Activated CD4-positive, alpha-beta T cell treated with anti-CD3 and anti-CD28 coated beads for 36 hours (primary cell): ENCODE measurements at regions of chr16 and their contacts with region 1.

Region 1: DNA sequence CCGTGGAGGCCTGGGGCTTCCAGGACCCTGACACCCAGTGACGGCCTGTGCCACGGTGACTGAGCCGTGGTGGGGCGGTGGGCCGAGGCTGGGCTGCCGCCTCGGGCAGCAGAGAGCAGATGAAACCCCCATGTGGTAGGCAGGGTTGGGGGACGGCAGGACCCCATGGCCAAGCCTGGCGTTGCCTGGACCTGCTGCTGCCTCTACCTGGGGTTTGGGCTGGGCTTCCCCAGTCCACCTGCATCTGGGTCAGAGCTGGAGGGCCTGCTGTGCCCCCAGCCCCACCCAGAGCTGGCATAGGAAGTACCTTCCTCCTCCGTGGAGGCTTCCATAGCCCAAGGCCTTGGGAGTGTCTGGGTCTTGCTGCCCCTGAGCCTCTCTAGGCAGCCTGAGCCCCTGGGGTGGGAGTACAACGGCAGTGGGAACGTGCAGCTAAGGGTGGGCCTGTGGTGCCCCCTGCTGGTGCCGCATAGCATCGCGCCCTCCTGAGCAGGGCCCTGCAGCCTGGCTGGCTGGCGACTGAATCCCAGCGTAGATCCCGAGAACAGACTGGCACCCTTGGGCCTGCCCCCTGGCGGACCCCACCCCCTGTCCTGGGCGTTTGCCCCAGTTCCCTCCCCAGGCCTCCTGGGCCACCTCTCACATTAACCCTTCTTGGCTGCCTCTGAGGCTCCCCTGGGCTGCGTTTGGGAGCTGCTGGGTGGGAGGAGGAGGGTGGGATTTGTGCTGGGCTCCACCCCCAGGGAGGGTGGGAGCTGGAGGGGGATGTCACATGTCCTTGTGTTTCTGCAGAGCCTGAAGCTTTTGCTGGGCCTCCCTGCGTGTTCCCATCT is 12.6 kb upstream of the ATP6V0C start:
- DNase-seq: peak; percentile 89
- ATAC-seq: peak; percentile 98
- H3K4me3 Mint-ChIP-seq: no peak overlapping the region
- H3K27ac Mint-ChIP-seq: no peak overlapping the region
- H3K4me1 Mint-ChIP-seq: no peaks in the 10 kb centered on the region
- H3K27me3 Mint-ChIP-seq: no peaks in the 10 kb centered on the region

Region 2: DNA sequence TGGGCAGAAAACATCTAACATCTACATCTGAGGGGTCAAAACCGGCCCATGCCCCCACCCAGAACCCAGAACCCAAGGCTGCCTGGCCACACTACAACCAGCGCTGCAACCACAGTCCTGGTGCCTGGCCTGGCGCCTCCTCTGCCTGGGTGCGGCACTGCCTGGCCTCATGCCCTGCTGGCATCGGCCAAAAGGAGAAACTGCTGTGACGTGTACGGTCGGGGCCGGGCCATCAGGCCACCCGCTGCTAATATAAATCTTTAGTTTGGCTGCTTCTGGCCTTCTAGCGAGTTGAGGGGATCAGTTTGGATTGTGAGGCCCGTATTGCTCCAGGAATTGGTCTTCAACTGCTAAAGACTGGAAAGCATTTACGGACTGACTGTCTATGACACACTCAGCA is 944.9 kb before region 1 on chr16:
- CTCF ChIA-PET with region 1: no interaction called
- POLR2A ChIA-PET with region 1: no interaction called
- intact Hi-C with region 1: no loop called
- DNase-seq: no peak
- ATAC-seq: no peak
- H3K4me3 Mint-ChIP-seq: no peak overlapping the region
- H3K27ac Mint-ChIP-seq: no peak overlapping the region
- H3K4me1 Mint-ChIP-seq: peaks cover 23% of the 10 kb centered on the region
- H3K27me3 Mint-ChIP-seq: no peaks in the 10 kb centered on the region

Region 3: GRCh38 chr16:2009789-2010510 is 491.2 kb before region 1 on chr16 and contains the start of gene ZNF598:
- CTCF ChIA-PET with region 1: no interaction called
- POLR2A ChIA-PET with region 1: no interaction called
- intact Hi-C with region 1: no loop called
- DNase-seq: peak; percentile 90
- ATAC-seq: peak; percentile 93
- H3K4me3 Mint-ChIP-seq: peak within 1 kb of the TSS; percentile 95
- H3K27ac Mint-ChIP-seq: peak within 1 kb of the TSS; percentile 90
- H3K4me1 Mint-ChIP-seq: peaks cover 35% of the 10 kb centered on the region
- H3K27me3 Mint-ChIP-seq: no peaks in the 10 kb centered on the region
- total RNA-seq, gene ZNF598: 64.6 to 69.8 TPM

Region 4: DNA sequence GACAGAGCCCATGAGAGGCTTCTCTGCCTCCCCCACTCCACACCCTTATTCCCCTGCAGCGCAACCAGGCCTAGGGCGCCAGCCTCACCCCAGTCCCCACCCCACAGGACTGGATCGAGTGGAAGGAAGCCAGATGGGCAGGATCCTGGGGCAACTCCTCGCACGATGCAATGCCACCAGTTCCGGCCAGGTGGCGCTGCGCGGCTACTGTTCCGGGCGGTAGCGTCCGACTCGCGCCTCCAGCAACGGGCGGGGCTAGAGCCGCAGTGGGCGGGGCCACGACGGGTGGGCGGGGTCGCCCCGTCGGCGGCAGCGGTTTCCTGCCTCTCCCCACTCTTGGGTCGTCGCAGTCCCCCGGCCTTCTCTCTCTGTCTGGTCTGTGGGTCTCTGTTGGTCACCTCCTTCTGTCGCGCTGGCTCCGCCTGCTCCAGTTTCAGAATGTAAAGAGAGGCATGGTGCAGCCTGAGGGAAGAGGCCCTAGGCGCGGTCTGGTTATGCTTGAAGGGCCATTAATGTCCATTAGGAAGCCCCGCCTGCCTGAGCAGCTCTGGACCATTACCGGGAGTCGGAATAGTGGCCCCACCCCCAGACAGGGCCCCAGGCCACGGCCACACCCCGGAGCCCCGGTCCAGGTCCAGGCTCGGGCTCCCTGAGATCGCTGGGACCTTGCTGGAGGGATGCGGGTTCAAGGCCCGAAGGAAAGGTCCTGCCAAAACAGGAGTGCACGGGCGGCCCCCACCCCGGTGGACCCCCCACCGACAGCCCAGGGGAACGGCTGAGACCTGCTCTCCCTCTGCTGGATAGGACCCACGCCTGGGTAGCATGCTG is 477.8 kb before region 1 on chr16:
- CTCF ChIA-PET with region 1: no interaction called
- POLR2A ChIA-PET with region 1: no interaction called
- intact Hi-C with region 1: loop called in 1 of 2 experiments (anchors 1 kb)
- DNase-seq: peak; percentile 97
- ATAC-seq: peak; percentile 86
- H3K4me3 Mint-ChIP-seq: peak overlapping the region; percentile 46
- H3K27ac Mint-ChIP-seq: no peak overlapping the region
- H3K4me1 Mint-ChIP-seq: peaks cover 15% of the 10 kb centered on the region
- H3K27me3 Mint-ChIP-seq: peaks cover 27% of the 10 kb centered on the region

Region 5: DNA sequence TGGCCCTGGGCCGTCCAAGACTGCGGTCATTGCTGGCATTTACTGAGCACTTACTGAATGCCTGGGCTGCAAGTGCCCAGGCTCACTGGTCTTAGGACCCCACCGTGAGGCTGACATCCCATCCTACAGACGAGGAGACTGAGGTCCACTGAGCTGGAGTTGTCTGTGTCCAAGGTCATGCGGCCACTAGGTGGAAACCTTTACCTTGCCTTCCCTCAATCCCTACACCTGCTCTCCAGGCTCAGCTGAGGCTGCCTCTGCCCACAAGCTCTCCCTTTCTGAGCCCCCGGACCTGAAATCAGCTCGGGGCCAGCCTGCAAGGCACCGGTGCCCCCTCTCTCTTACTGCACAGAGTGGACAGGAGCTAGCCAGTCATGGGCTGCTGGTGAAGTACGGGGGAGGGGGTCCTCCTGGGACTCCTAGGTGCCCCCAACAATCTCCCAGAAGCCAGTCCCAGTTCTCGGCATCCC is 306.2 kb before region 1 on chr16:
- CTCF ChIA-PET with region 1: interaction called, 3 read pairs
- POLR2A ChIA-PET with region 1: no interaction called
- intact Hi-C with region 1: loop called in 1 of 2 experiments (anchors 1 kb)
- DNase-seq: peak; percentile 74
- ATAC-seq: peak; percentile 87
- H3K4me3 Mint-ChIP-seq: peak overlapping the region; percentile 26
- H3K27ac Mint-ChIP-seq: no peak overlapping the region
- H3K4me1 Mint-ChIP-seq: peaks cover 5% of the 10 kb centered on the region
- H3K27me3 Mint-ChIP-seq: peaks cover 23% of the 10 kb centered on the region

Region 6: DNA sequence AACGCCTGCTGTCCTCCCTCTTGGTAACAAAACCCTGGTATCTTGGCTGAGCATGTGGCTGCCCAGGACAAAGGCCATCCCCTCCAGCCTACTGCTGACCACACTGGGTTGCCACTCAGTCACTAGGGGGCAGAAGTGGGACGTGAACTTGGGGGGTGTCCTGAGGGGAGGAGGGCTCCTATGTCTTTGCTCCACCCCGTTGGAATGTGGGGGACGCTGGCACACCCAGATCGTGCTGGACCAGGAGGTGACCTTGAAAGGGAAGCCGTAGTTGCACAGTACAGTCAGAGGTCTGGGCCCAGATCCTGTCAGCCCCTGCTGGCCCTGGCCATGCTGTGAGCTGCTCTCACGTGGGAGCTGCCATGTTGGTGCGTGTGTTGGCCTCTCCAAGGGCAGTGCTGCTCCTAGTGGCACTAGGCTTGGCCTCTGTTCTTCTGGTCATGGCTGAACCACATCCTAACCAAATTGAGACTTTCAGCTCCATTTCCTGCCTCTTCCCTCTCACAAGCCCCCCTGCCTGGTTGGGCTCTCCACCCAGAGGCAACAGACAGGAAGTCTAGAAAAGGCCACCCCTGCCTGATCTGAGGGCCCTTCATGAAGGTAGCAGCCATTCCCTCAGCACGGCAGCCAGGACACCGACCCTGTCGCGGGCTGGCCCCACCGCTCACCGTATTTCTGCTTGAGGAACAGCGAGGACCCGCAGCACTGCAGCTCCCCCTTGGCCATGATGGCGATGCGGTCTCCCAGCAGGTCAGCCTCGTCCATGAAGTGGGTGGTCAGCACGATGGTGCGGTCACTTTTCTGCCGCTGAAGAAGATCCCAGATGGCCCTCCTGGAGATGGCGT is 204.3 kb before region 1 on chr16:
- CTCF ChIA-PET with region 1: no interaction called
- POLR2A ChIA-PET with region 1: no interaction called
- intact Hi-C with region 1: loop called in 1 of 2 experiments (anchors 2 kb)
- DNase-seq: peak; percentile 49
- ATAC-seq: peak; percentile 49
- H3K4me3 Mint-ChIP-seq: no peak overlapping the region
- H3K27ac Mint-ChIP-seq: no peak overlapping the region
- H3K4me1 Mint-ChIP-seq: no peaks in the 10 kb centered on the region
- H3K27me3 Mint-ChIP-seq: no peaks in the 10 kb centered on the region

Region 7: DNA sequence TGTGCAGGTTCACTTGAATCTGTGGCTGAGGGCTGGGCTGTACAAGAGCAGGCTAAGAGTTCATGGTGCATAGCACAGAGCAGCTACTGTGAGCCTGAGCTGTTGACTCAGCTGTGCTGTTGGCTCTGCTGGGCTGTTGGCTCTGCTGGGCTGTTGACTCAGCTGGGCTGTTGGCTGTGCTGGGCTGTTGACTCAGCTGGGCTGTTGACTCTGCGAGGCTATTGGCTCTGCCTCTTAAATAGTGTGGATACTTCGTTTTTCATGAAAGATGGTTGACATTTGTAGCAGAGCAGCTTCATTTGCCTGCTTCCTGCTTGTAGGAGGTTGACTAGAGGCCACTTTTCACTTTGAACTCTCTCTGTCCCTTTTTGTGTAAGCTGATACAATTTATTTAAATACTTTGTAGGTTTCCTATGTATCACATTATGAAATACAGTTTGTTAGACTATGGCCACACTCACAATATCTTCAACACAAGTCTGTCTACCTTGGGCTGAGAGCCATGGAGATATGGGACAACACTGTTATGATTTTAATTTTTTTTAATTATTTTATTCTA is 112.2 kb before region 1 on chr16:
- CTCF ChIA-PET with region 1: no interaction called
- POLR2A ChIA-PET with region 1: no interaction called
- intact Hi-C with region 1: no loop called
- DNase-seq: peak; percentile 9
- ATAC-seq: peak; percentile 60
- H3K4me3 Mint-ChIP-seq: no peak overlapping the region
- H3K27ac Mint-ChIP-seq: no peak overlapping the region
- H3K4me1 Mint-ChIP-seq: no peaks in the 10 kb centered on the region
- H3K27me3 Mint-ChIP-seq: peaks cover 4% of the 10 kb centered on the region

Region 8: DNA sequence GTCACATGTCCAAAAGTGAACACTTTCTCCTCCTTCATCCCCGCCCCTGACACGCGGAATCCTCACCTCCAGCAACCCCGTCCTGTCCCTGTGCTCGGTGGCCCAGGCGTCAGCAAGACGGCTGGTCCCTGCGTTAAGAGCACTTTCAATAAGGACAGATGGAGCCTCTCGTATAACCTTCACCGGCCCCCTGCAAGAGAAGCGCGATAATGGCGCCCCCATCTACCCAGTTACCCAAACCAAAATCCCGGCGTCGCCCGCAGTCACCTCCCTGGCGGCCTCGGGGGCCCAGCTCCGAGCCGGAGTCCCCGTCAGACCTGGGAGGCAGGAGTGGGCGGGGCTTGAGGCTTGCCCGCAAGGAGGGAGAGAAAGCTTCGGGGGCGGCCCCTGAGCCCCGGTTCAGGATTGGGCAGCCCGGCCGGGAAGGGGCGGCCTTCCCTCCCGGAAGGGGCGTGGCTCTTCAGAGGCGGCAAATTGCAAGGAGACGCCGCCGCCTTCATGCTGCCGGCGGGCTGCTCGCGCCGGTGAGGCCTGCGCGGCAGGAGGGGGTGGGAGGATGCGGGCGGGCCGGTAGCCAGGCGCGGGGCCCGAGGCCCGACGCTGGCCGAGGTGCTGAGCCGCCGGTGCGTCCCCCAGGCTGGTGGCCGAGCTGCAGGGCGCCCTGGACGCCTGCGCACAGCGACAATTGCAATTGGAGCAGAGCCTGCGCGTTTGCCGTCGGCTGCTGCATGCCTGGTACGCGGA is 41.3 kb before region 1 on chr16 and contains the start of gene TEDC2:
- CTCF ChIA-PET with region 1: interaction called, 3 read pairs
- POLR2A ChIA-PET with region 1: no interaction called
- intact Hi-C with region 1: loop called (anchors 1 to 5 kb)
- DNase-seq: peak; percentile 99
- ATAC-seq: peak; percentile 98
- H3K4me3 Mint-ChIP-seq: peak within 1 kb of the TSS; percentile 73
- H3K27ac Mint-ChIP-seq: peak within 1 kb of the TSS; percentile 67
- H3K4me1 Mint-ChIP-seq: peaks cover 6% of the 10 kb centered on the region
- H3K27me3 Mint-ChIP-seq: no peaks in the 10 kb centered on the region
- total RNA-seq, gene TEDC2: 21.0 to 23.1 TPM

Region 9: GRCh38 chr16:2474877-2475412 is 26.2 kb before region 1 on chr16 and contains the start of gene TBC1D24:
- CTCF ChIA-PET with region 1: interaction called, 3 read pairs
- POLR2A ChIA-PET with region 1: no interaction called
- intact Hi-C with region 1: loop called in 1 of 2 experiments (anchors 1 kb)
- DNase-seq: peak; percentile 89
- ATAC-seq: peak; percentile 71
- H3K4me3 Mint-ChIP-seq: peak within 1 kb of the TSS; percentile 71
- H3K27ac Mint-ChIP-seq: peak within 1 kb of the TSS; percentile 69
- H3K4me1 Mint-ChIP-seq: peaks cover 6% of the 10 kb centered on the region
- H3K27me3 Mint-ChIP-seq: peaks cover 16% of the 10 kb centered on the region
- total RNA-seq, gene TBC1D24: 10.4 to 12.7 TPM

Region 10: GRCh38 chr16:2520092-2520783 is 19.1 kb after region 1 on chr16 and contains the start of gene AMDHD2:
- CTCF ChIA-PET with region 1: interaction called, 11 read pairs
- POLR2A ChIA-PET with region 1: no interaction called
- intact Hi-C with region 1: no loop called
- DNase-seq: peak; percentile 95
- ATAC-seq: peak; percentile 77
- H3K4me3 Mint-ChIP-seq: peak within 1 kb of the TSS; percentile 80
- H3K27ac Mint-ChIP-seq: peak within 1 kb of the TSS; percentile 89
- H3K4me1 Mint-ChIP-seq: peaks cover 52% of the 10 kb centered on the region
- H3K27me3 Mint-ChIP-seq: no peaks in the 10 kb centered on the region
- total RNA-seq, gene AMDHD2: 20.9 to 31.6 TPM